Breast epithelium (tissue), 4 donors: ENCODE measurements at regions of chr3 and their contacts with region 1.

Region 1: DNA sequence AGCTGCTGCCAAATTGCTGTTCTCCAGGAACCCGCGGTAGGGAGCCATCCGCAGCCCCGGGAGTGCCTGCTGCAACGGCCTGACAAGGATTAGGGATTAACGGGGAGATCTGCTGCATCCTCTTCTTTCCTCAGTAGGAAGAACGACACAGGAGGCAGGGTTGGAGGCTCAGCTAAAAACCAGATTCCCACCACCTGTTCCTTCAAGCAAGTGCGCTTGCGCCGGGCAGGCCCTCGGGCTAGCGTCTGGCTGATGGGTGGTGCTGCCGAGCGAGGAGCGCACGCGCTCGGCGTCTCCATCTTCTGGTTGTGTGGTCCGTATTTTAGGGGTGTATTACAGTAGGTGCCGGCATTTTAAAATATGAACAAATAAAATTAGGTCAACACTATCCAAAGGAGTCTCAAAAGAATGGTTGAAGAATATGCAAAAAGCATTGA is 25.4 kb upstream of the SLC25A26 start:
- DNase-seq: no peak
- H3K4me3 ChIP-seq: peak overlapping the region; percentile 7 to 54 (median 24)
- H3K27ac ChIP-seq: no peak overlapping the region
- H3K4me1 ChIP-seq: no peaks in the 10 kb centered on the region
- H3K27me3 ChIP-seq: no peaks in the 10 kb centered on the region
- CTCF ChIP-seq: no peak
- POLR2A ChIP-seq: no peak

Region 2: GRCh38 chr3:66153481-66154443 is 41.6 kb before region 1 on chr3:
- intact Hi-C with region 1: loop called (anchors 2 kb)
- DNase-seq: no peak
- H3K4me3 ChIP-seq: peak overlapping the region; percentile 19 to 58 (median 33)
- H3K27ac ChIP-seq: peak overlapping the region; percentile 3 to 6
- H3K4me1 ChIP-seq: no peaks in the 10 kb centered on the region
- H3K27me3 ChIP-seq: no peaks in the 10 kb centered on the region
- CTCF ChIP-seq: no peak
- POLR2A ChIP-seq: no peak